Gastrocnemius medialis (tissue), 4 donors: ENCODE measurements at regions of chr19 and their contacts with region 1.

Region 1: DNA sequence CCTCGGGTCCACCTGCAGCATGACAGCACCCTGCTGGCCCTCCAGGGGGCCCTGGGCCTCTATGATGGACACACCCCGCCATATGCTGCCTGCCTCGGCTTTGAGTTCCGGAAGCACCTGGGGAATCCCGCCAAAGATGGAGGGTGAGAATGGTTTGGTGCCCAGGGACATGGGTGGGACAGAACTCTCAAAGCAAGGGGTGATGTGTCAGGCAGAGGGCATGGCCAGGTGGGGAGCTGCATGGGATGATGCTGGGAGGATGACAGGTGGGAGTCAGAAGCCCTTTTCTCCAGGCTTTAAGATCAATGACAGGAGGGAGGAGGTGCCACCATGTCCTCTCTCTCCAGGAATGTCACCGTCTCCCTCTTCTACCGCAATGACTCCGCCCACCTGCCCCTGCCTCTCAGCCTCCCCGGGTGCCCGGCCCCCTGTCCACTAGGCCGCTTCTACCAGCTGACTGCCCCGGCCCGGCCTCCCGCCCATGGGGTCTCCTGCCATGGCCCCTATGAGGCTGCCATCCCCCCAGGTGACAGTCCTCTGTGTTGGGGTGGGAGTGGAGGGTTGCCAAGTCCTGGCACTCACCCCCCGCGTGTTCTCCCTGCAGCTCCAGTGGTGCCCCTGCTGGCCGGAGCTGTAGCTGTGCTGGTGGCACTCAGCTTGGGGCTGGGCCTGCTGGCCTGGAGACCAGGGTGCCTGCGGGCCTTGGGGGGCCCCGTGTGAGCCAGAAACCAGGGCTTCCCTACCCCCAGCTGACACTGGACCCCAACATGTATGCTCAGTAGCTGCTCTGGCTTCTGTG is 4.4 kb downstream of the ACP4 start:
- DNase-seq: no peak
- ATAC-seq: no peak
- H3K4me3 ChIP-seq: no peak overlapping the region
- H3K27ac ChIP-seq: no peak overlapping the region
- H3K4me1 ChIP-seq: no peaks in the 10 kb centered on the region
- H3K27me3 ChIP-seq: peaks cover 0 to 3% (median 0%) of the 10 kb centered on the region in 3 donors
- CTCF ChIP-seq: no peak
- POLR2A ChIP-seq: no peak

Region 2: DNA sequence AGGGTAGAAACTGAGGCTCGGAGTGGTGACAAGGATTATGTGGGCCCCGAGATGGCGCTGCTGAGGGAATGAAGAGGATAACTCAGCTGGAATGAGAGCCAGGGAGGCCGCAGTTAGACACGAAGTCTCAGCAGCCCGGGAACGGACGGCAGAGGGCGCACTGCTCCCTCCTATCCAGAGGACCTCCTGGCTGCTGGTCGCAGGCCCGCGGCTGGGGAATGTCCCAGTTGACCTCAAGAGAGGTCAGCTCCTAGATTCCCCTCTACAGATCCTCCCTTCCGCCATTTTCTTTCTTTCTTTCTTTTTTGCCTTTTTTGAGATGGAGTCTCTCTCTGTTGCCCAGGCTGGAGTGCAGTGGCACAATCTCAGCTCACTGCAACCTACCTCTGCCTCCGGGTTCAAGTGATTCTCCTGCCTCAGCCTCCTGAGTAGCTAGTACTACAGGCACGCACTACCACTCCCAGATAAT is 256.8 kb before region 1 on chr19:
- in situ Hi-C with region 1: loop called in 3 of 4 experiments (anchors 25 kb)
- intact Hi-C with region 1: no loop called
- DNase-seq: peak in 1 of 2 donors; percentile 47
- ATAC-seq: peak in 1 of 2 donors; percentile 47
- H3K4me3 ChIP-seq: no peak overlapping the region
- H3K27ac ChIP-seq: no peak overlapping the region
- H3K4me1 ChIP-seq: no peaks in the 10 kb centered on the region
- H3K27me3 ChIP-seq: peaks cover 0 to 4% (median under 1%) of the 10 kb centered on the region in 3 donors
- CTCF ChIP-seq: peak in 4 of 5 experiments; percentile 33 to 64 (median 56)
- POLR2A ChIP-seq: no peak